Left lung (tissue), 14 donors: ENCODE measurements at regions of chr17 and their contacts with region 1.

Region 1: DNA sequence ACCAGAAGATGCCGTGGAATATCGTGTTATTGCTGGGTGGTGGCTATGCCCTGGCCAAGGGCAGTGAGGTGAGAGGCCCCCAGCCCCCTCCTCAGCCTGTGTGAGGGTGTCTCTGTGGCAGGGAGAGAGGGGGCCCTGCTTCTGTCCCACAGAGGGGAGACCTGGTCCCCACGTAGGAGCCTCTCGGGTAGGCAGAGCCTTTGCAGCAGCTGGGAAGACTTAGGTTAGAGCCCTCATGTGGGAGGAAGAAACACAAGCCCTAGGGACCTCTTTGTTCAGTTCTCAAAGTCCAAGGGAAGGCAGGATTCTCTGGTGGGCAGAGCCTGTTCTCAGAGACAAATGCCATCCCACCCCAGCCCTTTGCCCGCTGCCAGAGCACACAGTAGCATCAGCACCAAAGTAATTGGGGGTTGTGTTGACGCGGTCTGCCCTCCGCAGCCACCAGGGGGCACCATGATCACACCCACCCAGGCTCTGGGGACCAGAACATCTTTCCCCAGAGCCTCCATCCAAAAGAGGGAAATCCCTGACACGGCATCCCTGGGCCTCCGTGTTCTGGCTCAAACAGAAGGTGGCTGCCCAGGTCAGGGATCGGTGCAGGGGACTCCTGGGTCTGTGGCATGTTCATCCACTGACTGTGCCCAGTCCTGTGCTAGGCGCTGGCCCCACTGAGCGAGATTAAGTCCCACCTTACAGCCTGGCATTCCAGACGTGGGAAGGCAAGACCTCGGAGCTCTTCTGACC is 11.5 kb upstream of the FOXN1 start:
- DNase-seq: peak; percentile 65 to 93 (median 78)
- ATAC-seq: peak; percentile 91
- H3K4me3 ChIP-seq: no peak overlapping the region
- H3K27ac ChIP-seq: no peak overlapping the region
- H3K4me1 ChIP-seq: no peaks in the 10 kb centered on the region
- H3K27me3 ChIP-seq: peaks cover 0 to 26% of the 10 kb centered on the region in 2 donors
- CTCF ChIP-seq: peak; percentile 84 to 88

Region 2: DNA sequence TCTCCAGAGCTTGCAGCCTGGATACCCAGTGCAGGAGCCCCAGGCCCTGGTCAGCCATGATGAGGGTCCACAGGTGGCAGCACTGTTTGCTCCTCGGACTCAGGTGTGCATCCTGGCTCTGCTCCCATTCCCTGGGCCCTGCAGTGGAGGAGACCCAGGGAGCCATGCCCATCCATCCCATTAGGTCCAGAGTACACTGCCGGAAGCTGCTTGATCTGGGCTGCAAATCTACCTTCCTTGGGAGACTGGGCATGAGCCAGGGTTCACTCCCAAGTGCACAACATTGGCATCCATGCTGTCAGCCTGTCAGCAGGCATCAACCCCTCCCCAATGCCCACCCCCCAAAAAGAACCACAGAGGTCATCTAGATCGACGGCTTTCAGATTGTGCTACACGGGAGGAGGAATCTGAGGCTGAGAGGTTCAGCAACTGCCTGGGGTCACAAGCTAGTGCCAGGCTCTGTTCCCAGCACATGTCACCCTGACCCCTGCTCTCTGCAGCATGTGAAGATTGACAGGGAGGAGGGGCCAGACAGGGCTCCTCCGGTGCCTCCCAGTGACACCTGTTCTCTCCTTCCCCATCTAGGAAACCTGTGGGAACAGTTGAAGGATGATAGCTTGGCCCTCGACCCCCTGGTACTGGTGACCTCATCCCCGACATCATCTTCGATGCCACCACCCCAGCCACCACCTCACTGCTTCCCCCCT is 42.1 kb after region 1 on chr17:
- intact Hi-C with region 1: loop called in 1 of 2 experiments (anchors 5 kb)
- DNase-seq: no peak
- ATAC-seq: no peak
- H3K4me3 ChIP-seq: no peak overlapping the region
- H3K27ac ChIP-seq: no peak overlapping the region
- H3K4me1 ChIP-seq: no peaks in the 10 kb centered on the region
- H3K27me3 ChIP-seq: no peaks in the 10 kb centered on the region
- CTCF ChIP-seq: no peak

Region 3: GRCh38 chr17:28552246-28552999 is 57.8 kb after region 1 on chr17 and contains the start of gene UNC119:
- intact Hi-C with region 1: loop called in 1 of 2 experiments (anchors 5 kb)
- DNase-seq: peak; percentile 72 to 98 (median 84)
- ATAC-seq: peak; percentile 95
- H3K4me3 ChIP-seq: peak within 1 kb of the TSS; percentile 93 to 98
- H3K27ac ChIP-seq: peak within 1 kb of the TSS in 1 of 2 donors; percentile 77
- H3K4me1 ChIP-seq: peaks cover 0 to 49% of the 10 kb centered on the region in 2 donors
- H3K27me3 ChIP-seq: no peaks in the 10 kb centered on the region
- CTCF ChIP-seq: no peak
- polyA plus RNA-seq, gene UNC119: 29.1 to 36.7 (median 35.9) TPM

Region 4: DNA sequence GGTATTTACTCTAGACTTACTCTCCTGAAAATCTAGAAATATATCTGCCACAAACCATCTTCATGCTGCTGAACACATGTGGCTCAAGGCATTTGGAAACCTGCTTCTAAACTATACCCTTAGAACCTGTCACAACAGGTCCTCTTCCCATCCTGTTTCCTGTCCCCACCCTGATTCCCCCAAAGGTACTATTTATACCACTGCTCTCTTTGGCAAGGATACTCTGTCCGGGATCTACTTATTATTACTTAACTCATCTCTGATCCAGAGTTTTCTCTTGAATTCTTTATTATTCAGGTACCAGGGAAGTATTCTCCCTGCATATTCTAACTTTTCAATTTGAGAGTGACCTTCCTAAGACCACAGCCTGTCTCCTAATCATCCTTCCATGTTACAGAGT is 282.6 kb after region 1 on chr17:
- intact Hi-C with region 1: no loop called
- DNase-seq: no peak
- ATAC-seq: no peak
- H3K4me3 ChIP-seq: no peak overlapping the region
- H3K27ac ChIP-seq: no peak overlapping the region
- H3K4me1 ChIP-seq: peaks cover 0 to 4% of the 10 kb centered on the region in 2 donors
- H3K27me3 ChIP-seq: no peaks in the 10 kb centered on the region
- CTCF ChIP-seq: no peak